ENCODE measurements at regions of chr3 and their contacts with region 1.

Region 1: DNA sequence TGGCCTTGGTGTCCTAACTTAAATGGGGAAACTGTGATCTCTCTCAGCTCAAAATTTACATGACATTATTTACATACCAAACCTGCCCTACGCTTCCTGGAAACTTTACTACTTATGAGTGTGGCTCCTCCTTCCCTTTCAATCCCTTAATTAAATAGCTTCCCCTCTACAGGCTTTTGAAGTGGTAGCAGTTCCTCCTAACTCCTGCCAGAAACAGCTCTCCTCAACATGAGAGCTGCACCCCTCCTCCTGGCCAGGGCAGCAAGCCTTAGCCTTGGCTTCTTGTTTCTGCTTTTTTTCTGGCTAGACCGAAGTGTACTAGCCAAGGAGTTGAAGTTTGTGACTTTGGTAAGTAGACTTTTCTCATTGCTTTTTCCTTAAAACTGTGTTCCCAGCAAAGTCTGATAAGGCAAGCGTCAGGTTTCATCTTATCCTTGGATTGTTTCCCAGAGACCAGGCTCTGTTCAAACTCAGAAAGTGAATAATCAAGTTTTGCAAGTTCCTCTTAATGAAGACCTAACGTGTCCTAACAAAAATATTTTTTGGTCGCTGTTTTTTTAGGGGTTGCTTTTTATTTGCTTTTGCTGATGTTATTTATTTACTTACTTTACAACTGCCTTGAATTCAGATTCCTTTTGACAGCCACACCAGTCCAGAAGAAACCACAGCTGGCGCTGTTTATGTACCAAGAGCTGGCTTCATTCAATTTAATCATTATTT is at the start of gene ACP3:
- H3K4me3 Mint-ChIP-seq: peak within 1 kb of the TSS; percentile 75
- H3K27ac Mint-ChIP-seq: peak within 1 kb of the TSS; percentile 95
- H3K4me1 Mint-ChIP-seq: peaks cover 51% of the 10 kb centered on the region
- H3K27me3 Mint-ChIP-seq: no peaks in the 10 kb centered on the region

Region 2: GRCh38 chr3:132231633-132232032 is 85.8 kb before region 1 on chr3:
- intact Hi-C with region 1: no loop called
- H3K4me3 Mint-ChIP-seq: no peak overlapping the region
- H3K27ac Mint-ChIP-seq: no peak overlapping the region
- H3K4me1 Mint-ChIP-seq: peaks cover 7% of the 10 kb centered on the region
- H3K27me3 Mint-ChIP-seq: no peaks in the 10 kb centered on the region

Region 3: GRCh38 chr3:132268956-132269355 is 48.4 kb before region 1 on chr3:
- intact Hi-C with region 1: loop called (anchors 5 kb)
- H3K4me3 Mint-ChIP-seq: no peak overlapping the region
- H3K27ac Mint-ChIP-seq: no peak overlapping the region
- H3K4me1 Mint-ChIP-seq: peaks cover 12% of the 10 kb centered on the region
- H3K27me3 Mint-ChIP-seq: no peaks in the 10 kb centered on the region

Region 4: GRCh38 chr3:132283440-132283839 is 33.9 kb before region 1 on chr3:
- intact Hi-C with region 1: loop called (anchors 1 kb)
- H3K4me3 Mint-ChIP-seq: peak overlapping the region; percentile 37
- H3K27ac Mint-ChIP-seq: peak overlapping the region; percentile 79
- H3K4me1 Mint-ChIP-seq: peaks cover 38% of the 10 kb centered on the region
- H3K27me3 Mint-ChIP-seq: no peaks in the 10 kb centered on the region

Measured in dendritic cell treated with granulocyte-macrophage colony-stimulating factor and Interleukin-4, amounts not matched to agents 40 ng/mL and 50 ng/mL, for 4 days (primary cell).